Activated B cell treated with CpG ODN at 0.5 μM for 24 hours (primary cell): ENCODE measurements at regions of chr19 and their contacts with region 1.

Region 1: DNA sequence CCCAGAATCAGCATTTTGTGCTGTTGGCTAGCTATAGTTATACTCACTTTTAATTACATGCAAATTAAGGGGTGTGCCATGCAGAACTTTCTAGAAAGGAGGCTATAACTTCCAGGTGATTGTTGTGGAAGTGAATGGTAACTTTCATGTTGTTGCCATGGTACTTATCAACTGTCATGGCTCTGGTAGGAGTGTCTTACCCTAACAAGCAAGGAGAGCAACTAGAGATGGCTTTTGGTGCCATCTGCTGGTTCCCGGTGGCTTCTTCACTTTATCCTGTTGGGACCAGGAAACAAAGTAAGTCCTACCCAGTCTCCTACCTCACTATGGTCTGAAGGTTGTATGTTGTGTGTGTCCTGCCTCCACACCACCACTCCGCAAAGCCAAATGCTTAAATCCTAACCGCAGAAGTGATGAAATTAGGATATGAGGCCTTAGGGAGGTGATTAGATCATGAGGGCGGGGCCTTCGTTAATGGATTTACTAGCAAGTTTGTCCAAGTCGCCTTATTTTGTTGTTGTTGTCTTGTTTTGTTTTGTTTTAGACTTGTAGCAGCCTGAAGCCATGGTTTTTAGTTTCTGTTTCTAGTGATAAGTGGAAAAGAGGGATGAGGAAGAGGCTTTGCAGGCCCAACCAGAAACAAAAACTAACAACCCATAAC is 22.6 kb downstream of the FBXL12 start:
- DNase-seq: peak; percentile 62
- ATAC-seq: peak; percentile 16
- H3K4me3 Mint-ChIP-seq: no peak overlapping the region
- H3K27ac Mint-ChIP-seq: peak overlapping the region; percentile 70
- H3K4me1 Mint-ChIP-seq: peaks cover 12% of the 10 kb centered on the region
- H3K27me3 Mint-ChIP-seq: no peaks in the 10 kb centered on the region
- CTCF ChIP-seq: no peak

Region 2: DNA sequence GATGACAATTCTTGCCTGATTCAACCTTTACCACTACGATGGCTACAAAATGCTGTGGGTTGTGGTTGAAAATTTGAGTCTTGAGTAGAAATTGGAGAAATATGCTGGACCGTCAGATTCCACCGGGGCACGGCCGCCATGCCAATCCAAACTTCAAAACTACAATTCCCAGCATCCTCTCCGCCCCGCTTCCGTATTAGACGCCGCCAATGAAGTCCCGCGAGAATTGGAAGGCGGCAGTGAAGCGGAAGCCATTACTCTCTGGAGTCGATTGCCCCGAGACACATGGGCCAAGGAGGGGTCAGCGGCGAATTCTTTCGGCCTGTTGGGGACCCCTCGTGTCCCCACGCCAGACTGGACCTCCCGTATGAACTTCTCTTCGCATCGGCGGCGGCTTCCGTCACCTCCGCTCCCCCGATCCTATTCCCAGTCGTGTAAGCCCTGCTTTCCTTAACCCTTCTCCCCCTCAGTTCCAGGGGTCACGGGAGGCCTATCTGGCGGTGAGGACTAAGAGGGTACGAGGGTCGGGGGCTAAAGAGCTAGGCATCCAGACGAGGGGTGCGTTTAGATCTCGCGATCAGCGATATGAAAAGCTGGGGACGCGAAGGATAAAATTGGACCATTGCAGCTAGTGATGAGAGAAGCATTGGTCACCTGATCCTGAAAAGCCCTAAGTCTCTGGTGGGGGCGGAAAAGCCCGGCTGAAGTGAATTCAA is 655.9 kb before region 1 on chr19 and contains the start of gene ZNF317:
- CTCF ChIA-PET with region 1: no interaction called
- POLR2A ChIA-PET with region 1: no interaction called
- intact Hi-C with region 1: loop called (anchors 1 kb)
- DNase-seq: peak; percentile 74
- ATAC-seq: peak; percentile 93
- H3K4me3 Mint-ChIP-seq: peak within 1 kb of the TSS; percentile 99
- H3K27ac Mint-ChIP-seq: peak within 1 kb of the TSS; percentile 98
- H3K4me1 Mint-ChIP-seq: peaks cover 42% of the 10 kb centered on the region
- H3K27me3 Mint-ChIP-seq: peaks cover 3% of the 10 kb centered on the region
- CTCF ChIP-seq: no peak
- total RNA-seq, gene ZNF317: 64.4 and 65.8 TPM in 2 replicates

Region 3: GRCh38 chr19:9309139-9309973 is 486.9 kb before region 1 on chr19 and contains the start of gene ZNF699:
- CTCF ChIA-PET with region 1: no interaction called
- POLR2A ChIA-PET with region 1: no interaction called
- intact Hi-C with region 1: loop called (anchors 2 kb)
- DNase-seq: peak; percentile 94
- ATAC-seq: peak; percentile 88
- H3K4me3 Mint-ChIP-seq: peak within 1 kb of the TSS; percentile 96
- H3K27ac Mint-ChIP-seq: peak within 1 kb of the TSS; percentile 98
- H3K4me1 Mint-ChIP-seq: peaks cover 24% of the 10 kb centered on the region
- H3K27me3 Mint-ChIP-seq: no peaks in the 10 kb centered on the region
- CTCF ChIP-seq: no peak
- total RNA-seq, gene ZNF699: 10.3 and 11.7 TPM in 2 replicates

Region 4: DNA sequence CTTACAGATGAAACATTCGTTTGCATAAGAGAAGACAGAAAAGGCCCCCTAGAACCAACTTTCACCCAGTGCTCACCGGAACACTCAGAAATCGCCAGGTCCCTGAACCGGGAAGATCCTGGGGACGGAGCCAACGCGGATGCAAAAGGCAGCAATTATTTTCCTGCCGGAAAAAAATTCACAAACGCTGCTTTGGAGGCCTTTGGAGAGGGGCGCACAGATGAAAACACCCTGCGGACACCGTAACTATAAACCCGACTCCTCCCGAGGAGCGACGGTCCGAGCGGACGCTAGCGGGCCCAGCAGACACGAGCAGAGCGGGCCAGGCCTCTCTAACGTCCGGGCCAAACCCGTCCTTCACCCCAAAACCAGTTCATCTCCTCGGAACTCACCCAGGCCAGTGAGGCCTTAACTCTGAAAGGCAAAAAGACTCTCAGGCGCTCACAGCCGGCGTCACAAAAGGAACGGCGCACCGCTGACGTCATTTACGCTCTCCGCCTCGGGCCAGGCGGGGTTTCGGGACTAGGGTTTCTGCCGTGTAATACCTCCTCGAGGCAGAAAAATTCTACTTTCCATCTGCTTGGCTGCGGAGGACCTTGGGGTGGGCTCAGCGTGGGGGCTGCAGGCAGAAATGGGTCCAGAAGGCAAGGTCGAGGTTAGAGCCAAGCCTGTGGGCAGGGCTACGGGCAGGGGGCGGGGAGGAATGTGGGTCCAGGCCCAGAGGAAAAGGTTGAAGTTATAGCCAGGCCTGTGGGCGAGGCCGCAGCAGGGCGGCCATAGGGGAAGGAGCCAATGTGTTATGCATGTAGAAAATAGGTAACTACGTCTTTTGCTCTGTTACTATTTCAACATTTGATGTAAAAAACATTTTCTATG is 257.8 kb before region 1 on chr19 and contains the start of gene ZNF426:
- CTCF ChIA-PET with region 1: no interaction called
- POLR2A ChIA-PET with region 1: no interaction called
- intact Hi-C with region 1: loop called (anchors 5 kb)
- DNase-seq: peak; percentile 79
- ATAC-seq: peak; percentile 92
- H3K4me3 Mint-ChIP-seq: peak within 1 kb of the TSS; percentile 98
- H3K27ac Mint-ChIP-seq: peak within 1 kb of the TSS; percentile 99
- H3K4me1 Mint-ChIP-seq: peaks cover 26% of the 10 kb centered on the region
- H3K27me3 Mint-ChIP-seq: no peaks in the 10 kb centered on the region
- CTCF ChIP-seq: no peak
- total RNA-seq, gene ZNF426: 18.8 and 22.7 TPM in 2 replicates

Region 5: DNA sequence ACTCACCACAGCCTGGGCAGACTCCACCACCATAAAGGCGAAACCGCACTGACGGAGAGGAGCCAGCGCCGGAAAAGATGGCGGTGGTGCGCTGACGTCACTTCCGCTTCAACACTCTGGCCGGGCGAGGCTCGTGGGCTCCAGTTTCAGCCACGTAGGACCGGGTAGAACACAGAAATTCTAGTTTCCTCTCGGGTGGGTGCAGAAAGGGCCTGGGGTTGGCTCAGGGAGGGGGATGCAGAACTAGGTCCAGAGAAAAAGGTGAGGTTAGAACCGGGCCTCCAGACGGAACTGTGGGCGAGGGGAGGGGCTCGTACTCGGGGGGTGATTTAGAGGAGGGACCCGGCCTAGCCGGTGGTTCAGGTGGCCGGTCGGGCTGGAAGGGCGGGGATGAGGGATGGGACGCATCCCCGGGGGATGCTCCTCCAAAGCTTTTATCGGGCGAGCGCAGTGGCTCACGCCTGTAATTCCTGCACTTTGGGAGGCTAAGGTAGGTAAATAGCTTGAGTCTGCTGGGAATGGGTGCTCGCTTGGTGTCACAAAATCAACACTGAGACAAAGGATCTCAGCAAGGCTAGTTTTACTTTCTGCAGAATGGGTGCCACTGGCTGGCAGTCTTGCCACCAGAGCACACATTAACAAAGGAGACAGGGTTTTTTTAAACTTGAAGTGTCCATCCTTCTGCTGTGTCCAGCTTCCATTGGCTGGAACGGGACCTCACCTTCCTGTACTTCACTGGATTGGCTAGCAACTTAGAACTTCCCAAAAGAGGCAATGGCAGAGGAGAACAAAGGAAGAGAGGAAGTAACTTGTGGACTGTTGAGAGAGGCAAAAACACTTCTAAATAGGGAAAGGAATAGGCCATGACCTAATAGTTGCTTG is 174.8 kb before region 1 on chr19 and contains the start of gene ZNF561:
- CTCF ChIA-PET with region 1: interaction called, 36 read pairs
- POLR2A ChIA-PET with region 1: interaction called, 7 read pairs
- intact Hi-C with region 1: loop called (anchors 1 kb)
- DNase-seq: peak; percentile 81
- ATAC-seq: peak; percentile 88
- H3K4me3 Mint-ChIP-seq: peak within 1 kb of the TSS; percentile 96
- H3K27ac Mint-ChIP-seq: peak within 1 kb of the TSS; percentile 98
- H3K4me1 Mint-ChIP-seq: peaks cover 20% of the 10 kb centered on the region
- H3K27me3 Mint-ChIP-seq: peaks cover 3% of the 10 kb centered on the region
- CTCF ChIP-seq: no peak
- total RNA-seq, gene ZNF561: 37.1 and 40.2 TPM in 2 replicates

Region 6: DNA sequence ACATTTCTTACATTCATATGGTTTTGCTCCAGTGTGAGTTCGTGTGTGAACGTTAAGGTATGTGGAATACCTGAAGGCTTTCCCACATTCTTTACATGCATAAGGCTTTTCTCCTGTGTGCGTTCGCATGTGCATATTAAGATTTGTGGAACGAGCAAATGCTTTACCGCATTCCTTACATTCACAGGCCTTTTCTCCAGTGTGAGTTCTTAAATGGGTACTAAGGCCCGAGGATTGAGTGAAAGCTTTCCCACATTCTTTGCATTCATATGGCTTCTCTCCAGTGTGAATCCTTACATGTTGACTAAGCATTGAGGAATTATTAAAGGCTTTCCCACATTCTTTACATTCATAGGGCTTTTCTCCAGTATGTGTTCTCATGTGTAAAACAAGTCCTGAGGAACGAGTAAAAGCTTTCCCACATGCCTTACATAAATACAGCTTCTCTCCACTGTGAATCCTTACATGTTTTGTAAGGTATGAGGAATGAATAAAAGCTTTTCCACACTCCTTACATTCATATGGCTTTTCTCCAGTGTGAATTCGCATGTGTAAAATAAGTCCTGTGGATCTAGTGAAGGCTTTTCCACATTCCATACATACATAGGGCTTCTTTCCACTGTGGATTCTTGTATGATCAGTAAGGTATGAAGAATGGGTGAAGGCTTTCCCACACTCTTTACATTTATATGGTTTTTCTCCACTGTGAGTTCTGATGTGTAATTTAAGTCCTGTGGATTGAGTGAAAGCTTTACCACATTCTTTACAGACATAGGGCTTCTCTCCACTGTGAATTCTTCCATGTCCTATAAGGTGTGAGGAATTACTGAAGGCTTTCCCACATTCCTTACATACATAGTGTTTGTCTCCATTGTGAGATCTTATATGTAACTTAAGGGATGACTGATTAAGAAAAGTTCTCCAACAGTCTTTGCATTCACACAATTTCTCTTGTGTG is 38.4 kb before region 1 on chr19:
- CTCF ChIA-PET with region 1: no interaction called
- POLR2A ChIA-PET with region 1: no interaction called
- intact Hi-C with region 1: no loop called
- DNase-seq: no peak
- ATAC-seq: no peak
- H3K4me3 Mint-ChIP-seq: no peak overlapping the region
- H3K27ac Mint-ChIP-seq: no peak overlapping the region
- H3K4me1 Mint-ChIP-seq: no peaks in the 10 kb centered on the region
- H3K27me3 Mint-ChIP-seq: no peaks in the 10 kb centered on the region
- CTCF ChIP-seq: no peak

Region 7: DNA sequence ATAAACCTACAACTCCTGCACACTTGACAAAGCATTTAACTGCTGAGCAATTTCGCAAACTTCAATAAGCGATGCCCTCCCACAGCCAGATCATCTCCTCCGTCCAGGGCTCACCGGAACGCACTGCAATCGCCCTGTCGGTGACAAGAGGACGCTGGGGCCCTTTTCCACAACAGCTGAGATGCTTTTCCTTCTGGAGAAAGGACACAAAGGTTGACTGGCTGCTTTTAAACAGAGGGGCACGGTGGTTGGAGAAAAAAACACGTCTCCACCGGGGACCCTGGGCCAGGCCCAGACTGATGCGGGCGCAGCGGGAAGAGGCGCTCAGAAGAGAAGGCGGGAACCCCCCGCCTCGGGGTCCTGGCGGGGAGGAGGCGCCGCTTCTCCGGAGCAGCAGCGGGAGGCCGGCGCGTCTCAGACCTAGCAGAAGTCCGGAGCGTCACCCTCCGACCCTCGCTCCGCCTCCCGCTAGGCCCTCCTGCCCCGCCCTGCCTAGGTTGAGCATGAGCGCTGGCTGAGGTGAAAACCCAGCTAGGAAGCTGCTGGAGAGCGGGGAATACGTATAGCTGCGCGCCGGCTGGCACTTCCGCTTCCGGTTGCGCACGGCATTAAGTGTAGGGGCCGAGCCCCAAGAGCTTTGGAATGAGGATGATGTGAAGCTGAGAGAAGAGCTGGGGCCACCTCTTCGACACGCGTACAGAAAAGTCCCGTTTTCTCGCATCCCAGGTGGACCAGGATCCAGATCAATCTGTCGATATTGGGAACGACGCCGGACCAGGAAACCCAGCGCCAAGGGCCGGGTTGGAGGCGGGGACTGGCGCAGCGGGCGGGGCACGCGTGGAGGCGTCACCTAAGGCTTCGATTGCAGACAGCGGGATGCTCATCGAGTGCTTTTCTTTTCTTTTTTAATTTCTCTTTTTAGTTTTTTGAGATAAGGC is 27.8 kb before region 1 on chr19 and contains the start of gene ZNF846:
- CTCF ChIA-PET with region 1: interaction called, 5 read pairs
- POLR2A ChIA-PET with region 1: interaction called, 16 read pairs
- intact Hi-C with region 1: loop called (anchors 1 kb)
- DNase-seq: peak; percentile 91
- ATAC-seq: peak; percentile 98
- H3K4me3 Mint-ChIP-seq: peak within 1 kb of the TSS; percentile 90
- H3K27ac Mint-ChIP-seq: peak within 1 kb of the TSS; percentile 94
- H3K4me1 Mint-ChIP-seq: peaks cover 9% of the 10 kb centered on the region
- H3K27me3 Mint-ChIP-seq: no peaks in the 10 kb centered on the region
- CTCF ChIP-seq: no peak
- total RNA-seq, gene ZNF846: 7.9 and 10.7 TPM in 2 replicates

Region 8: DNA sequence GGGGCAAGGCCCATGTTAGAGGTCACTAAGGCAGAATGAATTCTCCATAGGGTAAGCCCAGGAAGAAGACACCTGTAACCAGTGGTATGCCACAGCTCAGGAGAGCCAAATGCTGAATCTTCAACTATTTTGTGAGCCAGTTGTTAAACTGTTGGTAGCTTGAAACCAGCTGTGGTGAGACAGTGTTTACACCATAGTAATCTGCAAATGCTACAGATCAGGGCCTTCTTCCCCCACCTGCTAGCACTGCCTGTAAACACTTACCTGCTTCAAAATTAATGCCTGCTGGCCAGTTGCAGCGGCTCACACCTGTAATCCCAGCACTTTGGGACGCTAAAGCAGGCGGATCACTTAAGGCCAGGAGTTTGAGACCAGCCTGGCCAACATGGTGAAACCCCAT is 10.6 kb after region 1 on chr19:
- CTCF ChIA-PET with region 1: no interaction called
- POLR2A ChIA-PET with region 1: no interaction called
- intact Hi-C with region 1: no loop called
- DNase-seq: no peak
- ATAC-seq: no peak
- H3K4me3 Mint-ChIP-seq: no peak overlapping the region
- H3K27ac Mint-ChIP-seq: no peak overlapping the region
- H3K4me1 Mint-ChIP-seq: no peaks in the 10 kb centered on the region
- H3K27me3 Mint-ChIP-seq: no peaks in the 10 kb centered on the region
- CTCF ChIP-seq: no peak

Region 9: DNA sequence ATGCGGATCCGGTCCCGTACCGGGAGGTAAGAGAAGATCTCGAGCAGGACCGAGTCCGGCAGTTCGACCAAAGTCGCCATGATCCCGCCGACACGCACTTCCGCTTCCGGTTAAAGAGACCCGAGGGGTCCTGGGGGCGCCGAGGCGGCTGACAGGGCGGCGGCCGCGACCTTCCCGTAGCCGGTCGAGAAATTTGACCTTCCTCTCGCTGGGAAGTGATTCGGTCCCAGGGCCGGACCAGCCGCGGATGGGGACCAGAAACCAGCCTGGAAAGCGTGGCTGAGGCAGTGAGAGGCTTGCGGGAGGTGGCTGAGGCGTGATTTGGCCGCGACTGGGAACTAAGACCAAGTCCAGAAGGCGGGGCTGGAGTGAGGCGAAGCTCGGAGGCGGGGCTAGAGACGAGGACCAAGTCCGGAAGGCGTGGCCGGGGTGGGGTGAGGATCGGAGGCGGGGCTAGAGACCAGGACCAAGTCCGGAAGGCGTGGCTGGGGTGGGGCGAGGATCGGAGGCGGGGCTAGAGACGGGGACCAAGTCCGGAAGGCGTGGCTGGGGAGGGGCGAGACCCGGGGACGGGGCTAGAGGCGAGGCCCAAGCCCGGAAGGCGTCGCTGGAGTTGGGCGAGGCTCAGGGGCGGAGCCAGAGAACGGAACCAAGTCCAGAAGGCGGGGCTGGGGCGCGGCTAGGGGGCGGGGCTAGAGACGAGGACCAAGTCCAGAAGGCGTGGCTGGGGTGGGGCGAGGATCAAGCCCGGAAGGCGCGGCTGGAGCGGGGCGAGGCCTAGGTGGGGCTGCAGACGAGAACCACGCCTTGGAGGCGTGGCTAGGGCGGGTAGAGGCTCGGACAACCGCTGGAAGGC is 22.7 kb after region 1 on chr19 and contains the start of gene FBXL12:
- CTCF ChIA-PET with region 1: no interaction called
- POLR2A ChIA-PET with region 1: interaction called, 10 read pairs
- intact Hi-C with region 1: loop called (anchors 1 kb)
- DNase-seq: peak; percentile 100
- ATAC-seq: peak; percentile 87
- H3K4me3 Mint-ChIP-seq: peak within 1 kb of the TSS; percentile 94
- H3K27ac Mint-ChIP-seq: peak within 1 kb of the TSS; percentile 92
- H3K4me1 Mint-ChIP-seq: peaks cover 24% of the 10 kb centered on the region
- H3K27me3 Mint-ChIP-seq: no peaks in the 10 kb centered on the region
- CTCF ChIP-seq: no peak
- total RNA-seq, gene FBXL12: 34.6 and 41.9 TPM in 2 replicates

Region 10: DNA sequence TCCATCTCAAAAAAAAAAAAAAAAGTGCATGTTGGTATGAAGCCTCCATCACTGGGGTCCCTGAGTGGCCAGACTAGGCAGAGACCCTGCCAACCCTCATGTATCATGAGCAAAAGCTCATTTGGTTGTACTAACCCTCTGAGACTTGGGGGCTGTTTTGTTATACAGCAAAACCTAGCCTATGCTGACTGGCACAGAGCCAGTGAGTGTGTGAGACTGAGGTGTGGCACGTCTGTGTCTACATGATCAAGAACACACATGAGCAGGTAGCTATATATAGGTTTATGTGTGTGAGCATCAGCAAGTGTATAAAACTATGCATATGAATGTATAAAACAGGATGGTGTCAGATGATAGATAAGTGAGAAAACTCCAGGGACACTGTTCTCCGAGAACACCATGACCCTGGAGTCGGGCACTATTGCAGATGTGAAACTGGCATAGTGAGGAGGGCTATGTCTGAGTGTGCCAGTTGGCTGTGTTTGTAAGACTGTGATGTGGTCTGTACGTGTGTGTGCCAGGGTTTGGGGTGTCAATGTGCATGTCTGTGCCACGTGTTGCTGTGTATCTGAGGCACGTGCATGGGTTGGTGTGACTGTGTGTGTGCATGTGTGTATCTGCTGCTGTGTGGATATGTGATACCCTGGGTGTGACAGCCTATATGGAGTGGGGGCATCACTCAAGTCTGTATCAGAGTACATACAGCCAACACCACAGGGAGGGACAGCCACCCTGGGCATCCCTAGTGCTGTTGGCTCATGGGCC is 95.5 kb after region 1 on chr19:
- CTCF ChIA-PET with region 1: no interaction called
- POLR2A ChIA-PET with region 1: no interaction called
- intact Hi-C with region 1: no loop called
- DNase-seq: no peak
- ATAC-seq: no peak
- H3K4me3 Mint-ChIP-seq: no peak overlapping the region
- H3K27ac Mint-ChIP-seq: no peak overlapping the region
- H3K4me1 Mint-ChIP-seq: no peaks in the 10 kb centered on the region
- H3K27me3 Mint-ChIP-seq: peaks cover 23% of the 10 kb centered on the region
- CTCF ChIP-seq: no peak